Activated T-helper 1 cell treated with anti-CD3 and anti-CD28 coated beads, Interleukin-12 subunit alpha, Interleukin-12 subunit beta, Interleukin-2, Interleukin-4 antibody, amounts not matched to agents 30 ng/mL and 10 ng/mL and 1 ng/mL, durations not matched to agents 14 hours and 24 hours and 36 hours (primary cell): ENCODE measurements at regions of chr7 and their contacts with region 1.

Region 1: GRCh38 chr7:92854501-92855238 is 18.3 kb upstream of the CDK6 start:
- DNase-seq: no peak
- H3K4me3 Mint-ChIP-seq: peak overlapping the region; percentile 4
- H3K27ac Mint-ChIP-seq: peak overlapping the region; percentile 89
- H3K4me1 Mint-ChIP-seq: peaks cover 17% of the 10 kb centered on the region
- H3K27me3 Mint-ChIP-seq: no peaks in the 10 kb centered on the region

Region 2: GRCh38 chr7:92534572-92534971 is 320.1 kb before region 1 on chr7:
- intact Hi-C with region 1: no loop called
- DNase-seq: no peak
- H3K4me3 Mint-ChIP-seq: no peak overlapping the region
- H3K27ac Mint-ChIP-seq: no peak overlapping the region
- H3K4me1 Mint-ChIP-seq: peaks cover 24% of the 10 kb centered on the region
- H3K27me3 Mint-ChIP-seq: no peaks in the 10 kb centered on the region

Region 3: GRCh38 chr7:92731335-92732063 is 123.2 kb before region 1 on chr7:
- intact Hi-C with region 1: no loop called
- DNase-seq: no peak
- H3K4me3 Mint-ChIP-seq: peak overlapping the region; percentile 23
- H3K27ac Mint-ChIP-seq: peak overlapping the region; percentile 92
- H3K4me1 Mint-ChIP-seq: peaks cover 80% of the 10 kb centered on the region
- H3K27me3 Mint-ChIP-seq: no peaks in the 10 kb centered on the region

Region 4: DNA sequence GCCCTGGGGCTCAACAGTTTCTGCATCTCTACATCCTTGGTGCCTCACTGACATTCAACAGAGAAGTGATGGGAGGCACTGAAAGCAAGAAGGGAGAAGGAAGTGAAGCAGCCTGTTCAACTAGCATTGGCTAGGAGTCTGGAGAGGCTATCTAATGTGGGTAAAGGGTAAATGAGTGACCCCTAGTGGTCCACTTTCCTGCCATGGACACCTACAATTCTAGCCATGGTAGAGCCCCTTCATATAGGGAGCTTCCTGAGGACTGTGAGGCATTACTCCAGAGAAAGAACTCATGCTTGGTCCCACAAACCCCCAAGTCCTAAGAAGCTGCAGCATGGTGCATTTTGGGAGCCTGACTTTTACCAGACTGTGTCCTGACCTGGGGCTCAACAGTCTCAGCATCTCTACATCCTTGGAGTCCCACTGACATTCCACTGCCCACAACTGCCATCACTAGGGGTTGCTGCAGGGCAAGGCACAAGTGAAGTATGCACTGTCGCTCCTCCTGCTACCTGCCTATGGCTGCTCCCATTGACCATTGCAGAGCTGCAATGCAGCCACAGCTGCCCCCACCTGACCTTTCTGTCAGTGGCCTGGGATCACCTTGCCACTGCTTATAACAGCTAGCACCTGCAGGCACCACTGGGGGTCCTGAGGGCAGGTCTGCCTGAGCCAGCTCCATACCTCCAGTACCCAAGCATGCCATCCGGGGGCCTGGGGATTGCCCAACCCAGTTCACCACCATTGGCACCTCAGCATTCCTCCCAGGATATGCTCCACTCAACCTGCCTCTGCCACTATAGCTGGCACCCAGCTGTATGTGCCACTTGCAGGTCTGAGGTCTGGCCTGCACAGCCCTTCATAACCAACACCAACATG is 25.8 kb after region 1 on chr7:
- intact Hi-C with region 1: loop called (anchors 1 kb)
- DNase-seq: no peak
- H3K4me3 Mint-ChIP-seq: no peak overlapping the region
- H3K27ac Mint-ChIP-seq: no peak overlapping the region
- H3K4me1 Mint-ChIP-seq: peaks cover 67% of the 10 kb centered on the region
- H3K27me3 Mint-ChIP-seq: no peaks in the 10 kb centered on the region

Region 5: DNA sequence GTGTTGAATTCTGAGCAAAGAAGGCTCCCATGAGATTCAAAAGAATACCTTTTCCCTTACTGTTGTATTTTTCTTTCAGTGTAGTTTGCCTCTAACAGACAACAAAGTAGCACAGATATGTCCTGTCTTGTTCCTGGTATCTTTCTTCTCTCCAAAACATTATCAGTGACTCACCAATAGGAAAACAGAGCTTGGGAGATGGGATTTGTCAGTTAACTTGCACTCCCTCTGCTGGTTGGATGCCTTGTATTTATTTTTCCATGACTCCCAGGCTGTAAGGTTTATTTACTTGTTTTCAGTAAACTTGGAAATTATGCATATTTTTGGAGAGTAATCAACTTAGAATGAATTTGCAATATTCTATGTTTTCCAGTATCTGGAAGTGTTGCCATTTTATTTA is 133.4 kb after region 1 on chr7:
- intact Hi-C with region 1: no loop called
- DNase-seq: no peak
- H3K4me3 Mint-ChIP-seq: no peak overlapping the region
- H3K27ac Mint-ChIP-seq: no peak overlapping the region
- H3K4me1 Mint-ChIP-seq: peaks cover 6% of the 10 kb centered on the region
- H3K27me3 Mint-ChIP-seq: peaks cover 3% of the 10 kb centered on the region